ENCODE measurements at regions of chr19 and their contacts with region 1.

Region 1: DNA sequence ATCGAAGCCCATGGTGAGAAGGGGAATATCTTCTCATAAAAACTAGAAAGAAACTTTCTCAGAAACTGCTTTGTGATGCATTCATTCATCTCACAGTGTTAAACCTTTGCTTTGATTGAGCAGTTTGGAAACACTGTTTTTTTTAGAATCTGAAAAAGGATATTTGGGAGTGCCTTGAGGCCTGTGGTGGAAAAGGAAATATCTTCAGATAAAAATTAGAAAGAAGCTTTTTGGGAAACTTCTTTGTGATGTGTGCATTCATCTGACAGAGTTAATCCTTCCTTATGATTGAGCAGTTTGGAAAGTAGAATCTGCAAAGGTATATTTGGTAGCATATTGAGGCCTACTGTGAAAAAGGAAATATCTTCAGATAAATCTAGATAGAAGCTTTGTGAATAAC is 1594.9 kb downstream of the UQCRFS1 start:
- DNase-seq: no peak
- H3K4me3 ChIP-seq: no peak overlapping the region
- CTCF ChIP-seq: no peak

Region 2: GRCh38 chr19:27522223-27522622 is 95.8 kb before region 1 on chr19:
- in situ Hi-C with region 1: no loop called
- DNase-seq: no peak
- H3K4me3 ChIP-seq: no peak overlapping the region
- CTCF ChIP-seq: no peak

Region 3: DNA sequence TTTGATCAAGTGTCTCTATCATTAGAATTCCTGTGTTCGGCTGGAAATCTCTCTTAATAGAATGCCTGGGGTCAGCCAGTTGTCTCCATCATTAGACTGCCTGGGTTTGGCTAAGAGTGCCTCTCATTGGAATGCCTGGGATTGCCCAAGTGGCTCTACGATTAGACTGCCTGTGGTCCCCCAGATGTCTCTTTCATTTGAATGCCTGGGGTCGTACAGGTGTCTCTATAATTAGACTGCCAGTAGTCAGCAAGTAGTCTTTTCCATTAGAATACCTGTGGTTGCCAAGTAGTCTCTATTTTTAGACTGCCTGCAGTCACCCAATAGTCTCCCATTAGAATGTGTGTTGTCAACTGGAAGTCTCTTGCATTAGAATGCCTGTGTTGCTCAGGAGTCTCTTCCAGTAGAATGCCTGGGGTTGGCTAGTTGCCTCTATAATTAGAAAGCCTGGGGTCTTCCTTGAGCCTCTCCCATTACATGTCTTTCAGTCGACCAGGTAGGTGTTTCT is 71.8 kb after region 1 on chr19:
- in situ Hi-C with region 1: loop called (anchors 5 kb)
- DNase-seq: no peak
- H3K4me3 ChIP-seq: no peak overlapping the region
- CTCF ChIP-seq: no peak